K562 (cell line): ENCODE measurements at regions of chr1 and their contacts with region 1.

Region 1: DNA sequence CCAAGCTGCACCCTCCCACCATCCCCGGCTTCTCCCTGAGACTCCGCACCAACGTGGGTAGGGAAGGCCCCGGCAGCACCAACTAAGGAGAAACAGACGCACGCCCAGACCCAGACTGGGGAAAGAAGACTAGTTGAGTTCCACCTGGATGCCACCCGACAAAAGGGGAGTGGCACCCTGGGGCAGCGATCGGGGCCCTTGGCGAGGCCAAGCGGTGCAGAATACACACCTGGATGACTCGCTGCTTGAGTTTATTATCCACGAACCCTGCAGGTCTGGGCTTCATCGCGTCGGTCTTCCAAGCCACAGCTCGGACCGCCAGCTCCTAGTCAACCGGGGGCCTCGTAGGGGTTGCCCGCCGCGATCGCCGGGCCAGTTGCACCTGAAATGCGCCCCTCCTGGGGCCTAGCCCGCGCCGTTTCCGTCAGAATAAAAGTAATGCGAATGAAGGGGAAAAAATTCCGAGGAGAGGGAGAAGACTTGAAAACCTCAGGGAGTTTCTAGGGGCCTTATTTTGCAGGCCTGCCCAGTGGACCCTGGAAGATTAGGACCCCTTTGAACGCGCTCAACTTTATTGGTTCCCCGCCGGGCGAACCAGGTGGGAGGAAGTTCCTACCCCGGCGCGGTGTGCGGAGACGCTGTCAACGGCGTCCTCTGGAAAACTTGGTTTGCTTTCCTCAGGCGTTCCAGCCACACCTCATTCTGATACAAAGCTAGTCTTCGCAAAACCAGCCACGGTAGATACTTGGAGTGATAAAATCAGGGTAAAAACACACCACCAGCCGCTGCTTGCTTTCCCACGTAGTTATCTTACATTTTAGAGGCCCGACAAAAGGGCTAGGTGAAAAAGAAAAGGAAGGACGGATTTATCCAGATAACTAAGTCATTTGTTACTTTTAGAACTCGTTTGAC is at the start of gene NVL:
- DNase-seq: peak; percentile 92 to 97 (median 94)
- ATAC-seq: peak; percentile 94
- H3K4me3 ChIP-seq: peak within 1 kb of the TSS; percentile 72
- H3K27ac ChIP-seq: peak within 1 kb of the TSS; percentile 92
- H3K4me1 ChIP-seq: peaks cover 9 to 25% of the 10 kb centered on the region in 2 experiments
- H3K27me3 ChIP-seq: no peaks in the 10 kb centered on the region
- CTCF ChIP-seq: no peak
- EP300 ChIP-seq: peak; percentile 70
- POLR2A ChIP-seq: peak; percentile 87
- RAD21 ChIP-seq: peak in 1 of 2 experiments; percentile 18; a peak in 2 of 4 replicates
- polyA plus RNA-seq, gene NVL: 32.5 to 64.1 TPM

Region 2: GRCh38 chr1:223700942-223701637 is 629.0 kb before region 1 on chr1:
- CTCF ChIA-PET with region 1: interaction called, 8 read pairs
- POLR2A ChIA-PET with region 1: no interaction called
- in situ Hi-C with region 1: loop called (anchors 5 kb)
- intact Hi-C with region 1: loop called (anchors 1 kb)
- DNase-seq: peak; percentile 79 to 93 (median 85)
- ATAC-seq: peak; percentile 93
- H3K4me3 ChIP-seq: no peak overlapping the region
- H3K27ac ChIP-seq: peak overlapping the region; percentile 70
- H3K4me1 ChIP-seq: peaks cover 17 to 29% of the 10 kb centered on the region in 2 experiments
- H3K27me3 ChIP-seq: no peaks in the 10 kb centered on the region
- CTCF ChIP-seq: 0 out of 6 replicates have a peak, but pooled peaks of 1 of the 3 experiments have one; percentile 6
- EP300 ChIP-seq: peak; percentile 68
- POLR2A ChIP-seq: peak; percentile 59; the same call in 1 of the 2 replicates
- RAD21 ChIP-seq: peak in 1 of 2 experiments; percentile 26; a peak in 2 of 4 replicates

Region 3: DNA sequence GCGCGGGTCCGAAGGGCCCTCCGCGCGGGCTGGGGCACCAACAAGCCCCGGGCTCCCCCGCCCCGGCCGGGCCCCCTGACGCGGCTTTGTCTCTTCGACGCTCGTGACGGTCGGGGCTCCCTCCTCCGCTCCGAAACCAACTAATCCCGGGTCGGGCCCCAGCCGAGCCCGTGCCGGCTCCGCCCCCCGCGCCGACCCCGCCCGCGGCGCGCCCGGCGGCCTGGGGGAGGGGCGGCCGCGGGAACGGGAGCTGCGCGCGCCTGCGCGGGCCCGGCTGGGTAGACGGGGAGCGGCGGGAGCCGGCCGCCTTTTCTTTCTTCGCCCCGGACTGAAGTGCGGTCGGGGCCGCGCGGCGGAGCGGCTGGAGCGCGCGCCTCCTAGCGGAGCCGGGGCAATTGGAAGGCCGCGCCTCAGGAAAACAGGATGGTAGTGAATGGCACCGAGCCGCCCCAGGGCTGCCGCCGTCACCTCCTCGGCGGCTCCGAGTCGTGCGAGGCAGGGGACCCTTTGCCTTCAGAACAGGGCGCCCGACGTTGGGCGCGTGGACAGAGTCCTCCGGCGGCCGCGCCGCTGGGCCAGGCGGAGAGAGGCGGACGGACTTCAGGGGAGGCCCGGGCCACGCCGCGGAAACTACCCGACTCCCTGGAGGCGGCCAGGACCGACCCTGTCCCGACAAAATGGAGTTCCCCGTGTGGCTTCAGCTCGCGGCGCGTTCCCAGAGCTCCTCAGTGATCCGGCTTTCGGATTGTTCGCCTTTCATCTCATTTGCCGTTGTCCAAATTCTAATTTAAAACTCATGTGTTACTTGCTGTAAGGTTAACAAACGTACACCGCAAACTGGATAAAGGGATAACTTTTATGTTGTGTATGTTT is 484.1 kb before region 1 on chr1 and contains the start of gene TP53BP2:
- CTCF ChIA-PET with region 1: no interaction called
- POLR2A ChIA-PET with region 1: no interaction called
- in situ Hi-C with region 1: no loop called
- intact Hi-C with region 1: loop called (anchors 5 kb)
- DNase-seq: peak; percentile 94 to 99 (median 97)
- ATAC-seq: peak; percentile 85
- H3K4me3 ChIP-seq: peak within 1 kb of the TSS; percentile 81
- H3K27ac ChIP-seq: peak within 1 kb of the TSS; percentile 93
- H3K4me1 ChIP-seq: peaks cover 23 to 34% of the 10 kb centered on the region in 2 experiments
- H3K27me3 ChIP-seq: no peaks in the 10 kb centered on the region
- CTCF ChIP-seq: peak; percentile 74 to 87 (median 81)
- EP300 ChIP-seq: no peak
- POLR2A ChIP-seq: peak; percentile 89
- RAD21 ChIP-seq: peak; percentile 69 to 70
- polyA plus RNA-seq, gene TP53BP2: 17.0 to 20.7 TPM

Region 4: GRCh38 chr1:224113918-224114786 is 215.9 kb before region 1 on chr1 and contains the start of gene FBXO28:
- CTCF ChIA-PET with region 1: interaction called, 8 read pairs
- POLR2A ChIA-PET with region 1: interaction called, 14 read pairs
- in situ Hi-C with region 1: loop called (anchors 25 kb)
- intact Hi-C with region 1: loop called (anchors 1 kb)
- DNase-seq: peak; percentile 97 to 99 (median 98)
- ATAC-seq: peak; percentile 98
- H3K4me3 ChIP-seq: peak within 1 kb of the TSS; percentile 94
- H3K27ac ChIP-seq: peak within 1 kb of the TSS; percentile 84
- H3K4me1 ChIP-seq: peaks cover 5 to 11% of the 10 kb centered on the region in 2 experiments; a peak in 3 of 5 replicates
- H3K27me3 ChIP-seq: no peaks in the 10 kb centered on the region
- CTCF ChIP-seq: no peak
- EP300 ChIP-seq: no peak
- POLR2A ChIP-seq: peak; percentile 98
- RAD21 ChIP-seq: no peak
- polyA plus RNA-seq, gene FBXO28: 4.1 to 5.8 TPM

Region 5: DNA sequence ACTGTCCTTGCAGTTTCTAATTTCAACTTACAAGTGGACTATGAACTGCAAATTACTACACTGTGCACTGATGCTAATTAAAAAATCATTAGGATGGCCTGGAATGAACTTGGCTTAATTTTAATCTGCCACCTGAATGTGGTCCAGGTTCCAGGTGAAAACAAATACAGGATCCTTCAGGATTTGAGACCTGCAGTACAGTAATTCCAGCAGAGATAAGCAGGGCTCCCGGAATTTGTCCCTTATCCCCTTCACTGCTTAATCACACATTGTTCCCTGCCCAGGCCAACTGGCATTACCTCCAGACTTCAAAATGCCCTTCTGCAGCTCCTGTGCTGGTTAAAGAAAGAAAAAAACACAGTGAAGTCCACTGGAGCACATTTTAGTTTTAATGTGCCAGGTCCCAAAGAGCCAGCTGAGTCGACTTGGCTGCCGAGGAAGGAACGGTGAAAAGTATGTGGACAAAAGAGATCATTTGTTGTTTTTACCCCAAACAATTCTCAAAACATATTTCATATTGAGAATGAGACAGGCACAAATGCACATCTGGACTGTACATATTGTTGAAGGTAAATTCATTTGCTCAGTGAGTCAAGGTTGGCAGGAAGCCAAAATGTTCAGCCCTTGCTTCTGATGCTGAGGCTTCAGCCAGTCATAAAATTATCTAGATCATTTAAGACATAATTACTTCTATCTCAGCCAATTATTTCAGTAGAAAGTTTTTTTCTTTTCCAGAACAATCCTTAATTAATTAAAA is 118.7 kb before region 1 on chr1:
- CTCF ChIA-PET with region 1: no interaction called
- POLR2A ChIA-PET with region 1: interaction called, 3 read pairs
- in situ Hi-C with region 1: no loop called
- intact Hi-C with region 1: loop called (anchors 5 kb)
- DNase-seq: peak in 1 of 4 experiments; percentile 74
- ATAC-seq: no peak
- H3K4me3 ChIP-seq: no peak overlapping the region
- H3K27ac ChIP-seq: no peak overlapping the region
- H3K4me1 ChIP-seq: peaks cover 15 to 19% of the 10 kb centered on the region in 2 experiments; a peak in 4 of 5 replicates
- H3K27me3 ChIP-seq: no peaks in the 10 kb centered on the region
- CTCF ChIP-seq: no peak
- EP300 ChIP-seq: no peak
- POLR2A ChIP-seq: no peak
- RAD21 ChIP-seq: no peak

Region 6: GRCh38 chr1:224368409-224368808 is 38.3 kb after region 1 on chr1:
- CTCF ChIA-PET with region 1: no interaction called
- POLR2A ChIA-PET with region 1: no interaction called
- in situ Hi-C with region 1: no loop called
- intact Hi-C with region 1: no loop called
- DNase-seq: no peak
- ATAC-seq: no peak
- H3K4me3 ChIP-seq: no peak overlapping the region
- H3K27ac ChIP-seq: no peak overlapping the region
- H3K4me1 ChIP-seq: no peaks in the 10 kb centered on the region
- H3K27me3 ChIP-seq: no peaks in the 10 kb centered on the region
- CTCF ChIP-seq: no peak
- EP300 ChIP-seq: no peak
- POLR2A ChIP-seq: no peak
- RAD21 ChIP-seq: no peak

Region 7: DNA sequence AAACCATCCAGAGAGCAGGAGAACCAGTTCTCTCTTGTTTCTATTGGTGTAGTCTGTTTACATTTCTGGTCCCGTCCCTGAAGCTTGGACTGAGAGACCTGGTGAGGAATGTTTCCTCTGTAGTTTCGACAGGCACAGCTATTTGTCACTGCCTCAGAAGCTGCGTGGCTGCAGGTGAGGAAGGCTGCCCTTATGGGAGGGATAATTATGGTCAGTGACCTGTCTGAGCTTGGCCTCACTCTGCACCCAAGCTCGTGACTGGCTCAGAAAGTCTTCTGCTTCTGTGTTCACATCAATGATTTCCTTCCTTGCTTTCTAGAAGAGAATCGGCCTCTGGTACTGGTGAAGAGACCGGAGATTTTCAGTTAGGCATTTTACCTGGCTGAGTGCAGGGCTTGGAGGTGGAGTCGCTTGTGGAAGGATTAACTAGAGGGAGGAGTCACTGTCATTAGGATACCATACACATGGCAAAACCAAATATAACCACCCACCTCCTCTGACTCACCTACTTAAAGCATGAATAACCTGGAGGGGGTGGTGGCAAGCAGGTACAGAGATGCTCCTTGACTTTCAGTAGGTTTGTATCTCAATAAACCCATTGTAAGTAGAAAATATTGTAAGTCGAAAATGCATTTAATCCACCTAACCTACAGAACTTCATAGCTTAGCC is 124.4 kb after region 1 on chr1:
- CTCF ChIA-PET with region 1: interaction called, 5 read pairs
- POLR2A ChIA-PET with region 1: no interaction called
- in situ Hi-C with region 1: no loop called
- intact Hi-C with region 1: loop called (anchors 2 kb)
- DNase-seq: peak in 1 of 4 experiments; percentile 2
- ATAC-seq: no peak
- H3K4me3 ChIP-seq: no peak overlapping the region
- H3K27ac ChIP-seq: no peak overlapping the region
- H3K4me1 ChIP-seq: peaks cover 12 to 20% of the 10 kb centered on the region in 2 experiments
- H3K27me3 ChIP-seq: no peaks in the 10 kb centered on the region; a peak in 1 of 5 replicates
- CTCF ChIP-seq: no peak
- EP300 ChIP-seq: no peak
- POLR2A ChIP-seq: no peak
- RAD21 ChIP-seq: no peak

Region 8: GRCh38 chr1:224922404-224923164 is 592.5 kb after region 1 on chr1:
- CTCF ChIA-PET with region 1: no interaction called
- POLR2A ChIA-PET with region 1: no interaction called
- in situ Hi-C with region 1: no loop called
- intact Hi-C with region 1: loop called (anchors 10 kb)
- DNase-seq: peak; percentile 51 to 64 (median 56)
- ATAC-seq: peak; percentile 92
- H3K4me3 ChIP-seq: no peak overlapping the region
- H3K27ac ChIP-seq: no peak overlapping the region
- H3K4me1 ChIP-seq: no peaks in the 10 kb centered on the region
- H3K27me3 ChIP-seq: peaks cover 10 to 16% of the 10 kb centered on the region in 2 experiments
- CTCF ChIP-seq: peak; percentile 63 to 90 (median 76)
- EP300 ChIP-seq: no peak
- POLR2A ChIP-seq: no peak
- RAD21 ChIP-seq: peak; percentile 82 to 89